ENCODE measurements at regions of chr5 and their contacts with region 1.

Region 1: DNA sequence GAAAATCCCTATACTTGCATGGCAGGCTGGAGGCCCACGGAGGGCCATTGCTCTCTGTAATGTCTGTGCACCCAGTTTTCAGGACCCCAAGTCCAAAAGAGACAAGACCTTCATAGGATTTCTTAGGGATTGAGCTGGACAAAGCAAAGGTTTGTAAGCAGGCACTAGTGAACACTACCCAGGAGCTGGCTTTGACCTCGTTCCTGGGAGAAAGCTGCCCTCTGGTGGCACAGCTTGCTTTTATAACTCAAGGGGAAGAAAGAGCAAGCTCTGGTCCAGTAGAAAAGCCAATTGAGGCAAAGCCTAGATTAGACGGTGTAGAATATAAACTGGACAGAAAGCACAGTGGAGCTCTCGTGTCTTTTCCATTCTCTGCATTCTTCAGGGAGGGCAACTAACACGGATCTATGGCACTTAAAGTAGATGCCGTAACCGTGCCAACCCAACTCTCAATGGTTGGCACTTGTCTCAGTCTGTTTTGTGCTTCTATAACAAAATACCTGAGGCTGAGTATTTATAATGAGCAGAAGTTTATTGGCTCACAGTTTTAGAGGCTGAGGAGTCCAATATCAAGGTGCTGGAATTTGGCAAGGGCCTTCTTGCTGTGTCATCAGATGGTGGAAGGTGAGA is 7.9 kb downstream of the GABRP start:
- DNase-seq: peak; percentile 73
- H3K27ac ChIP-seq: no peak overlapping the region
- CTCF ChIP-seq: peak; percentile 55

Region 2: DNA sequence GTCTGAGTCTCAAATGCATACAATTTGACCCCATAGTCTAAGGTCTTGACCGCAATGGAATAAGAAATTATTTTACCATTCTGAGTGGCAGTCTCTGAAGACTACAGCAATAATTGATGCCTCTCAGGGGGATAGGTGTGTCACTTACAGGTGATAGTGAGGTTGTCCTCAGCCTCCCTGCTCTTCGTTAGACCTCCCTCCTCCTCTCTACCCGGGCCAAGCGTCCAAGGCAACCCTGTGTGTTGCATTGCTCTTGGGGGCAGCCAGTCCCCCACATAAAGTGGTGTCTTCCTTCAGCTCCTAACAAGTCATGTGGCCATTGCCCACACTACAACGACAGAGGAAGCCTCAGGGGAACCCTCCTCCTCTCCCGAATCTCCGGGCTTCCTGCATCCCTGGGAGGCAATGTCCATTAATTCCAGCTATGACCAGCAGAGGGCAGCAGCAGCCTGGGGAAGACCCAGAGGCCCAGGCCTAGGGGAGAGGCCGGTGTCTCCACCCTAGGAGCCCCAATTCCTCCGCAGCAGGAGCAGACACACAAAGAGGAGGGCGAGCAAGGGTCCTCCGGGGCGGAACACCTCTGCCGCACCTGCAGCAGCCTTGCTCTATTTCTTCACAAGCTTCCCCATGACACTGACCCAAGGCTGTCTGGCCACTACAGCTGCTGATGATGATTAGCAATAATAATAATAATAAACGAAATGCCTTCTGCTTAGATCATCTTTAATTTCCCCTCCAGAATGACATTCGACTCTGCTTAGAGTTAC is 152.8 kb before region 1 on chr5:
- CTCF ChIA-PET with region 1: interaction called, 28 read pairs
- POLR2A ChIA-PET with region 1: no interaction called
- DNase-seq: peak; percentile 87
- H3K27ac ChIP-seq: no peak overlapping the region
- CTCF ChIP-seq: peak; percentile 91

Region 3: DNA sequence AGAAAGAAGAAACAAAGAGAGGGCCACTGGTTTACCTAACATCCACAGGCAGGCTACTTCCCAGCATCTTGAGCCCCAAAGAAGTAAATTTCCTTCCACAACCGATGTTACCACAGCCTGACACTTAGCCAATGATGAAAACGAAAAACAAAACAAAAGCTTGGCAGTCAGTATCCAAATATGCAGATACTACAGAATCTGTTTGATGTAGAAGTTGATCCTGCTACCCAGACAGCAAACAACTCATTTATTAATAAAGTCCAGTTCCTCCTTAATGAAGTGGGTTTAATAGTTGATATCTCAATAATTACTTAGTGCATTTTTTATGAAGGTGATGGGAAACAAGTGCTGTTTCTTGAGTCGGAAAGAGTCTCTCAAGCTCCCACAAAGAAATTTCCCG is 75.0 kb before region 1 on chr5:
- CTCF ChIA-PET with region 1: no interaction called
- POLR2A ChIA-PET with region 1: no interaction called
- DNase-seq: no peak
- H3K27ac ChIP-seq: no peak overlapping the region
- CTCF ChIP-seq: no peak

Region 4: GRCh38 chr5:170747851-170748250 is 43.6 kb before region 1 on chr5:
- CTCF ChIA-PET with region 1: interaction called, 146 read pairs
- POLR2A ChIA-PET with region 1: no interaction called
- DNase-seq: no peak
- H3K27ac ChIP-seq: no peak overlapping the region
- CTCF ChIP-seq: no peak

Region 5: DNA sequence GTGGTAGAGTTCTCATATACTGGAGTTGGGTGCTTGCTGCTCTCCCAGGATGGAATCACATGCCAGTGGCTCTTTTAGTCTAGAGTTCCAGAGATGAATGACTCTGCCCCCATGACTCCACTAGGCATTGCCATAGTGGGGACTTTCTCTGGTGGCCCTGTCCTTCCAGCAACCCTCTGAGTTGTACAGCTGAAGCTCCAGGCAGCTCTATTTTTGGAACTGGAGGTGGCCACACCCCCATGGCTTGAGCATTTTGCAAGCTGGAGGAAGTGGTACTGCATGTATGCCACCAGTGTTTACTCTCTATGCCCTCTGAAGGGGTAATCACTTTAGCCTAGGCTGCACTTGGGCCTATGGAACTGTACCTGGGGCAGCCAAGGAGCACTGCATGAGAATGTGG is 183.0 kb after region 1 on chr5:
- CTCF ChIA-PET with region 1: interaction called, 10 read pairs
- POLR2A ChIA-PET with region 1: no interaction called
- DNase-seq: no peak
- H3K27ac ChIP-seq: no peak overlapping the region
- CTCF ChIP-seq: no peak

Measured in RWPE1 (cell line).